Common myeloid progenitor, CD34-positive (primary cell): ENCODE measurements at regions of chr5 and their contacts with region 1.

Region 1: GRCh38 chr5:60295423-60295822 is 401.9 kb upstream of the PDE4D start:
- DNase-seq: peak; percentile 39 to 43 (median 42)
- H3K4me3 ChIP-seq: no peak overlapping the region
- H3K27ac ChIP-seq: no peak overlapping the region
- H3K4me1 ChIP-seq: no peaks in the 10 kb centered on the region
- H3K27me3 ChIP-seq: no peaks in the 10 kb centered on the region

Region 2: DNA sequence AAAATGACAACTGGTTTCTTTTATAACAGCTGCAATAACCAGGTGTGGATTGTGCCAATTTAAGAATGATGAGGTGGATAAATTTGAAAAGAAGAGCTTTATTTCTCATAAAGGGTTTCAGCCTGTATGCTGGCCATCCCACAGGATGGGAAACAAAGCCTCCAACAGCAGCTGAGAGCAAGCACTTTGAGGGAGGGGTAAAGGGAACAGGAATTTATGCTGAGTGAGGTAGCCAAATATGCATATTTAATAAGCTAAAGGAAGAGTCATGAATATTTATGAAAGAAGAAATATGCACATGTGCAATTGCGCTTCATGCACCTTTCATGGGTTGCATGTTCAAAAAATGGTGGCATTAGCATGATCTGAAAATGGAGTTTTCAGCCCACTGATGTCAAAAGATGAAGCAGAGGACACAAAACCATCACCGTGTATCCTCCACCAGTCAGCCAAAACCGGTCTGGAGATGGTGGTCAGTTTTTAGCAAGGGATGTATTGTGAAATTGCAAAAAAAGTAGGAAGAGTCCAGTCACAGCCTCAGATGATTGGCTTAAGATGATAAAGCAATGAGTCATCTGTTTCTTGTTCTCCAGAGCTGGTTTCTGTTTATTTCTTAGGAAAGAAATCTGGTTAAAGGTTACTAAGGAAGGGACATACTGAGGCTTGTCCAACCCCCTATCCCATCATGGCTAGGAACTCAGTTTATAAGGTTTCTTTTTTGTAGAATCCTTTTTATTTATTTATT is 356.6 kb after region 1 on chr5:
- CTCF ChIA-PET with region 1: interaction called, 11 read pairs
- POLR2A ChIA-PET with region 1: no interaction called
- DNase-seq: no peak
- H3K4me3 ChIP-seq: no peak overlapping the region
- H3K27ac ChIP-seq: no peak overlapping the region
- H3K4me1 ChIP-seq: peaks cover 0 to 8% (median 7%) of the 10 kb centered on the region in 4 experiments
- H3K27me3 ChIP-seq: no peaks in the 10 kb centered on the region